ENCODE measurements at regions of chrX and their contacts with region 1.

Region 1: GRCh38 chrX:109485470-109486340 is 3.8 kb upstream of the GUCY2F start:
- DNase-seq: peak; percentile 31 to 64 (median 44)
- ATAC-seq: peak in 1 of 4 donors; percentile 50
- H3K4me3 ChIP-seq: no peak overlapping the region
- H3K27ac ChIP-seq: no peak overlapping the region
- H3K4me1 ChIP-seq: no peaks in the 10 kb centered on the region
- H3K27me3 ChIP-seq: peaks cover 0 to 38% (median 0%) of the 10 kb centered on the region in 9 donors
- CTCF ChIP-seq: peak; percentile 72 to 98 (median 88)
- POLR2A ChIP-seq: no peak

Region 2: GRCh38 chrX:109553862-109554261 is 68.2 kb after region 1 on chrX:
- intact Hi-C with region 1: no loop called
- DNase-seq: no peak
- ATAC-seq: no peak
- H3K4me3 ChIP-seq: no peak overlapping the region
- H3K27ac ChIP-seq: no peak overlapping the region
- H3K4me1 ChIP-seq: no peaks in the 10 kb centered on the region
- H3K27me3 ChIP-seq: peaks cover 0 to 27% (median 0%) of the 10 kb centered on the region in 9 donors
- CTCF ChIP-seq: no peak
- POLR2A ChIP-seq: no peak

Region 3: DNA sequence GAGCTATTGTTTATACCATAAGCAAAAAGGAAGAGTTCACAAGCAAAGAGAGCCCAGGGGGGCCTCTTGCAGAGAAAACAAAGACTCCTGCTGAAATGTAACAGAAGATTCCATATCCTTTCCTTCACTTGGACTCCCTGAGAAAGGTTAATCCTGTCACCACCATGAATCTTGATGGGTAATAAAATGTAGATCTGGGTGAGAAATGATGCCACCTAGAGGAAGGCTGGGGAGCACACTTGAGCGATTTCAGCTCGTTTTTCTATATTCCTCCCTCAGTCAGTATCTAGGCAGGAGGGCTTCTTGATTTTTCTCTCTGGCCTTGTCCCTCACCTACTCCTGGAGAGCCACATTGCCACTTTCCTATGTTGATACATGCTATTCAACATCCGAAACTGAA is 149.5 kb after region 1 on chrX:
- intact Hi-C with region 1: loop called (anchors 1 to 5 kb)
- DNase-seq: no peak
- ATAC-seq: no peak
- H3K4me3 ChIP-seq: no peak overlapping the region
- H3K27ac ChIP-seq: no peak overlapping the region
- H3K4me1 ChIP-seq: no peaks in the 10 kb centered on the region
- H3K27me3 ChIP-seq: peaks cover 0 to 10% (median 0%) of the 10 kb centered on the region in 9 donors
- CTCF ChIP-seq: peak in 11 of 12 donors; percentile 17 to 42 (median 33)
- POLR2A ChIP-seq: no peak

Region 4: DNA sequence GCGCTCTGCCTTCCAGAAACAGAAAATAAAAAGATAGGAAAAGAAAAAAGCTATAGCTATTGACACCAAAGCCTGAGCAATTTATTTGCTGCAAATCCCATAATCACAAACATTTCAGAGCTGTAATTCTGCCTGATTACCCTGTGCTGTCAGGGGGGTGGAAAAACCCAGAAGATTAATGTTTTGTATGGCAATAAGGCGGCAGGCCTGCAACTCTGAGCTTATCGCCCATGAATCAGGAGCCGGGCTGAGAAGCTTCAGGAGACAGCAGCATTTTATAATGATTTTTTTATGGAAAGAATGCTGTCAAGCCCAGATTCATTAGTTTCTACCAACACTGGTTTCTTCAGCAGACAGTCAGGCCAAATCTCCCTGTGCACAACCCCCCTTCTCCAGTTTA is 434.6 kb after region 1 on chrX:
- intact Hi-C with region 1: no loop called
- DNase-seq: no peak
- ATAC-seq: no peak
- H3K4me3 ChIP-seq: no peak overlapping the region
- H3K27ac ChIP-seq: no peak overlapping the region
- H3K4me1 ChIP-seq: no peaks in the 10 kb centered on the region
- H3K27me3 ChIP-seq: peaks cover 0 to 14% (median 0%) of the 10 kb centered on the region in 9 donors
- CTCF ChIP-seq: no peak
- POLR2A ChIP-seq: no peak

Region 5: DNA sequence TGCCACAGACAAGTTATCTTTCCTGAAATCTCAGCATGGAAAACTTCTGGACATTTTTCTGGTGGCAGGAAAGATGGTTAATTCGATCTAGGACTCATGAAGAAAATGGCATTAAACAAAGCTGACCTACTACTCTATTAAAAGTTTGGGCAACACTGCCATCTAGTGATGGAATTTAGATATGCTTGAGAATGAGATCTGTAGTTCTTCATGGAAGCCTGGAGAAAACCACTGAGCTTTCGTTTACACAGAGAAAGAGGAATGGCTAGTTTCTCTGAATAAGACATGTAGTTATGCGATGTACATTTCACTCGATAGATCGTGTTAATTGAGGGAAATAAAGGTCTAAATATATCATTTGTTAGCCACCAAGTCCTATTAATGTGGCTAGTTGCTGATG is 1361.6 kb after region 1 on chrX:
- intact Hi-C with region 1: loop called in 1 of 10 experiments (anchors 10 kb)
- DNase-seq: no peak
- ATAC-seq: peak in 3 of 4 donors; percentile 60 to 73 (median 70)
- H3K4me3 ChIP-seq: no peak overlapping the region
- H3K27ac ChIP-seq: no peak overlapping the region
- H3K4me1 ChIP-seq: no peaks in the 10 kb centered on the region
- H3K27me3 ChIP-seq: peaks cover 0 to 13% (median 0%) of the 10 kb centered on the region in 9 donors
- CTCF ChIP-seq: peak; percentile 22 to 75 (median 58)
- POLR2A ChIP-seq: no peak

Measured in heart left ventricle (tissue), 16 donors.